ENCODE measurements at regions of chr5 and their contacts with region 1.

Region 1: GRCh38 chr5:73303148-73304079 is 130.4 kb downstream of the TMEM174 start:
- DNase-seq: no peak
- H3K4me3 ChIP-seq: peak overlapping the region in 2 of 4 donors; percentile 22 to 36
- H3K27ac ChIP-seq: no peak overlapping the region
- H3K4me1 ChIP-seq: peaks cover 15 to 28% (median 16%) of the 10 kb centered on the region in 4 donors
- H3K27me3 ChIP-seq: peaks cover 100% of the 10 kb centered on the region
- CTCF ChIP-seq: peak in 1 of 5 experiments; percentile 15
- EP300 ChIP-seq: no peak
- POLR2A ChIP-seq: no peak

Region 2: DNA sequence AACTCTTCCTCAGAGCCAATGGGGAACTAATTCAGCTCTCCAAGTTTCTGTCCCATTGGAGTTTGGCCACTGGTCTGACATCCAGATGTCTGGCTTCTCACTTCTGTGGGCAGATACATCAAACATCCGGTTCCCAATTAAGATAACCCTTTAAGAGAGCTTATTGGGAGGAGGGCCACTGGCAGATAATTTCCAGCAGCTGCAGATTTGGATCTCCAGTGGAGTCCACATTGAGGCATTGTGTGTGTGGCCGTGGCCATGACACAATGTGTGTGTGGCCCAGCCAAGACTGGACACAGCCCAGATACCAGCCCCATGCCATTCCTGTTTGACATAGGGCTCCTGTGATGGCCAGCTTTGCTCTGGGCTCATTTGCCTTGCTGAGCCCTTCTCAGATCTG is 1306.6 kb before region 1 on chr5:
- in situ Hi-C with region 1: no loop called
- intact Hi-C with region 1: no loop called
- DNase-seq: no peak
- H3K4me3 ChIP-seq: no peak overlapping the region
- H3K27ac ChIP-seq: no peak overlapping the region
- H3K4me1 ChIP-seq: no peaks in the 10 kb centered on the region
- H3K27me3 ChIP-seq: no peaks in the 10 kb centered on the region
- CTCF ChIP-seq: no peak
- EP300 ChIP-seq: no peak
- POLR2A ChIP-seq: no peak

Region 3: GRCh38 chr5:72417333-72418207 is 885.8 kb before region 1 on chr5:
- in situ Hi-C with region 1: no loop called
- intact Hi-C with region 1: no loop called
- DNase-seq: no peak
- H3K4me3 ChIP-seq: no peak overlapping the region
- H3K27ac ChIP-seq: no peak overlapping the region
- H3K4me1 ChIP-seq: no peaks in the 10 kb centered on the region
- H3K27me3 ChIP-seq: no peaks in the 10 kb centered on the region
- CTCF ChIP-seq: no peak
- EP300 ChIP-seq: no peak
- POLR2A ChIP-seq: no peak

Region 4: GRCh38 chr5:73221726-73222125 is 81.7 kb before region 1 on chr5:
- in situ Hi-C with region 1: no loop called
- intact Hi-C with region 1: loop called (anchors 1 kb)
- DNase-seq: no peak
- H3K4me3 ChIP-seq: no peak overlapping the region
- H3K27ac ChIP-seq: no peak overlapping the region
- H3K4me1 ChIP-seq: no peaks in the 10 kb centered on the region
- H3K27me3 ChIP-seq: peaks cover 99% of the 10 kb centered on the region
- CTCF ChIP-seq: no peak
- EP300 ChIP-seq: no peak
- POLR2A ChIP-seq: no peak

Region 5: DNA sequence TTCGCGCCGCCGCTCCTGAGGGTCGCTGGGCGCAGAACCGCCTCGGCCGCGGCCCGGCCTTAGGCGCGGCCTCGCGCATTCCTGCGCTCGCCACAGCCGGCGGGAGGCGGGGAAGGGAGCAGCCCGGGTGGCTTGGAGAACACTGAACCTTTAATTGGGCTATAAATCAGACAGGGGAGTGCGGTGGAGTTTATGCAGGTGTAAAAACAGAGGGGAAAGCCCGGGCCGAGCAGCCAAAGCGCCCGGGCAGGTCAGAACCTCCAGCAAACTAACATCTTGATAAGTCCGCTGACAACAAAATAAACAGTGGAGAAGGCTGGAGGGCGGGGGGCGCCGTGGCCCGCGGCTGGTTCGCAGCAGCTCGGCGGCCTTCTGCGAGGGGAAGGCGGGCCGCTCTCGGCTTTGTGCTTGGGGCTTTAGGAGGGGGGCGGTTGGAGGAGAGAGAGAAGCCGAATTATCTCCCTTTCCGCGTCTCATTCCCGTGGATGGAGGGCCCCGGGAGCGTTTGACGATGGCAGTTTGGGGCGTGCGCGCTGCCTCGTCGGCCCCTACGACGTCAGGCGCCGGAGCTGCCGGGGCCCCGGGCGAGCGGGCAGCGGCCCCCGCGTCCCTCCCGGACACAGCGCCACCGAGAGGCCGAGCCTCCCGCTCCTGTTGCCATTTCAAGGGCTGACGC is 133.8 kb after region 1 on chr5:
- in situ Hi-C with region 1: loop called in 2 of 4 experiments (anchors 10 to 25 kb)
- intact Hi-C with region 1: loop called (anchors 10 kb)
- DNase-seq: peak; percentile 55
- H3K4me3 ChIP-seq: peak overlapping the region in 3 of 4 donors; percentile 13 to 46 (median 26)
- H3K27ac ChIP-seq: no peak overlapping the region
- H3K4me1 ChIP-seq: peaks cover 9 to 21% (median 19%) of the 10 kb centered on the region in 4 donors
- H3K27me3 ChIP-seq: peaks cover 99% of the 10 kb centered on the region
- CTCF ChIP-seq: peak in 2 of 5 experiments; percentile 17 to 19
- EP300 ChIP-seq: no peak
- POLR2A ChIP-seq: no peak

Measured in transverse colon (tissue), 4 donors.